ENCODE measurements at regions of chr22 and their contacts with region 1.

Region 1: GRCh38 chr22:41543854-41544670 is at the start of gene POLR3H:
- DNase-seq: peak; percentile 98
- H3K4me3 ChIP-seq: peak within 1 kb of the TSS; percentile 88
- H3K27ac ChIP-seq: peak within 1 kb of the TSS; percentile 21
- H3K4me1 ChIP-seq: peaks cover 31% of the 10 kb centered on the region
- CTCF ChIP-seq: peak; percentile 87
- total RNA-seq, gene POLR3H: 26.6 and 28.5 TPM in 2 replicates

Region 2: DNA sequence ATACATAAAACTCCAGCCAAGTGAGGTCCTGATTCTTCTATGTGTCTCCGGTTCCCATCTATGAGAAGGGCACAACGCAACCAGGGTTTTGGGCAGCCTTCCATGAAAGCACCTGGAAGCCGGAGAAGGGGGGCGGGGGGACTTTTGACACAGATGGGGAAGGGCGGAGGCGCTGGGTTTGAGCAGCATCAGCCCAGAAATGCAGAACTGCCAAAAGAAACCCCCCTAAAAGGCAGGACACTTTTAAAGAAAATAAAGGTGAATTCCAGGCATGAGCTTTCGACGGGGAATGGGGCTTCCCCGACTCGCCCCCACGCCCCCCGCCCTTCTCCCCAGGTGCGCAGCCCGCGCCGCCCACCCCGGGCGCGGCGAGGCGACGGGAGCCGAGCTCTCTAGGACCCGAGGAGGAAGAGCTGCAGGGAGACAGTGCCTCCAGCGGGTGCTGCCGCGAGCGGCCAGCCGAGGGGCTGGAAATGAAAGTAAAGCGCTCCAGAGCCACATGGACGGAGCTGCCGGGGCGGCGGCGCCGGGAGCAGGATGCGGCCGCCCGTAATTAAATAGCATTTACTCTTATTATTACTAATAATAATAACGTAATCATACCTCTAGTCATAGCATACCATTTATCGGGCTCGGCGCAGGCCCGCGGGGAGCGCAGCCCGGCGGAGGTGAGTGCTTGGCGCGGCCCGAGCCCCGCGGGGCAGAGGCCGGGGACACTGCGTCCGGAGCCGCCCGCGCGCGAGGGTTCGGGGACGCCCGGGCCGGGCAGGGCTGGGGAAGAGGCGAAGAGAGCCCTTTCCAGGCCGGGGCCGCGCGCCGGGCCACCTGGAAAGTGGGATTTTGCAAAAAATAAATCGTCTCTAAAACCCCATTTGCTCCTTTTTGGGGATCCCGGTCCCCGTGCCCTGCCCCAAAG is 242.7 kb before region 1 on chr22 and contains the start of gene ZC3H7B:
- CTCF ChIA-PET with region 1: no interaction called
- POLR2A ChIA-PET with region 1: no interaction called
- intact Hi-C with region 1: loop called (anchors 1 kb)
- DNase-seq: peak; percentile 92
- H3K4me3 ChIP-seq: peak within 1 kb of the TSS; percentile 99
- H3K27ac ChIP-seq: peak within 1 kb of the TSS; percentile 64
- H3K4me1 ChIP-seq: peaks cover 20% of the 10 kb centered on the region
- CTCF ChIP-seq: peak; percentile 67
- total RNA-seq, gene ZC3H7B: 42.4 and 46.7 TPM in 2 replicates

Region 3: GRCh38 chr22:41589391-41590241 is 45.6 kb after region 1 on chr22 and contains the start of gene PMM1:
- CTCF ChIA-PET with region 1: interaction called, 3 read pairs
- POLR2A ChIA-PET with region 1: no interaction called
- intact Hi-C with region 1: loop called (anchors 2 kb)
- DNase-seq: peak; percentile 100
- H3K4me3 ChIP-seq: peak within 1 kb of the TSS; percentile 81
- H3K27ac ChIP-seq: peak within 1 kb of the TSS; percentile 64
- H3K4me1 ChIP-seq: peaks cover 19% of the 10 kb centered on the region
- CTCF ChIP-seq: no peak
- total RNA-seq, gene PMM1: 17.0 and 17.5 TPM in 2 replicates

Region 4: DNA sequence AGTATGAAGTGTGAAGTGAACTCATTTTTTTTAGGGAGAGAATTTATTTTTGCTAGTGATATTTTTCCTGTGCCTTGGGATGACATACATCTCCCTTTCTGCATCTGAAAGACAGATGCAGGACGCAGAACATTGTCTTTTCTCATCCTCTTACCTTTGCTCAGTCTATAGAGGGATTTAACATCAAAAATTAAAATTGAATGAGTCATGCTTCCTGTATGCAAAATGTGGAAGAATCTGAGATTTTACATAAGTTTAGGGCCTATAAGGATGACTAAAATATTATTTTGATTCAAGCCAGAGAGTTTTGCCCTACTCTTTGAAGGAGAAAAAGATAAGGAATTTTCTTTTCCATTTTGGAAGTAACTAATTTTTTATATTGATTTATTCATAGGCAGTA is 104.4 kb after region 1 on chr22:
- CTCF ChIA-PET with region 1: no interaction called
- POLR2A ChIA-PET with region 1: no interaction called
- intact Hi-C with region 1: no loop called
- DNase-seq: no peak
- H3K4me3 ChIP-seq: no peak overlapping the region
- H3K27ac ChIP-seq: no peak overlapping the region
- H3K4me1 ChIP-seq: no peaks in the 10 kb centered on the region
- CTCF ChIP-seq: no peak

Measured in OCI-LY7 (cell line).